ENCODE measurements at regions of chr6 and their contacts with region 1.

Region 1: GRCh38 chr6:35534407-35535170 is 21.9 kb upstream of the TULP1 start:
- DNase-seq: no peak
- H3K4me3 ChIP-seq: no peak overlapping the region
- CTCF ChIP-seq: no peak
- POLR2A ChIP-seq: no peak

Region 2: DNA sequence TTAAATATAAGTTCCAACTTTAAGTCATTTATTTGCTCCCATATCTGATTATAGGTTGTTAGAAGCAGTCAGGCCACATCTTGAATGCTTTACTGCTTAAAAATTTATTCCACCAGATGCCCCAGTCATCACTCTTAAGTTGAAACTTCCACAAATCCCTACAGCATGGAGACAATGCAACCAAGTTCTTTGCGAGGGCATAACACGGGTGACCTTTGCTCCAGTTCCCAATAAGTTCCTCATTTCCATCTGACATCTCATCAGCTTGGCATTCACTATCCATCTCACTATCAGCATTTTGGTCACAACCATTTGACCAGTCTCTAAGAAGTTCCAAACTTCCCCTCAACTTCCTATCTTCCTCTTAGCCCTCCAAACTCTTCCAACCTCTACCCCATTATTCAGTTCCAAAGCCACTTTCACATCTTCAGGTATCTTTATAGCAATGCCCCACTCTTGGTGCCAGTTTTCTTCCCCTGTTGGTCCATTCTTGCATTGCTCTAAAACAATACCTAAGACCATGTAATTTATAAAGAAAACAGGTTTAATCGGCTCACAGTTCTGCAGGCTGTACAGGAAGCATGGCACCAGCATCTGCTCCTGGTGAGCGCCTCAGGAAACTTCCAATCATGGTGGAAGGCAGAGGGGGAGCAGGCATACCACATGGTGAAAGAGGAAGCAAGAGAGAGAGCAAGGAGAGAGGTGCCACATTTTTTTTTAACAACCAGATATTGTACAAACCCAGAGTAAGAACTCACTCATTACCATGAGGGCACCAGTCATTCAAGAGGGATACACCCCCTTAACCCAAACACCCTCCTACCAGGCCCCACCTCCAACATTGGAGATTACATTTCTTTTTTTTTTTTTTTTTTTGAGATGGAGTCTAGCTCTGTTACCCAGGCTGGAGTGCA is 1929.4 kb before region 1 on chr6:
- intact Hi-C with region 1: loop called (anchors 5 kb)
- DNase-seq: no peak
- H3K4me3 ChIP-seq: no peak overlapping the region
- CTCF ChIP-seq: no peak
- POLR2A ChIP-seq: no peak

Measured in lower leg skin (tissue), 4 donors.